Gastrocnemius medialis (tissue), 4 donors: ENCODE measurements at regions of chr16 and their contacts with region 1.

Region 1: GRCh38 chr16:66928702-66929388 is 3.5 kb upstream of the RRAD start:
- DNase-seq: peak in 1 of 2 donors; percentile 88
- ATAC-seq: peak; percentile 4 to 10
- H3K4me3 ChIP-seq: no peak overlapping the region
- H3K27ac ChIP-seq: peak overlapping the region; percentile 91 to 99 (median 96)
- H3K4me1 ChIP-seq: peaks cover 59 to 83% of the 10 kb centered on the region in 2 donors
- H3K27me3 ChIP-seq: no peaks in the 10 kb centered on the region
- CTCF ChIP-seq: peak; percentile 41 to 69 (median 62)
- POLR2A ChIP-seq: peak in 1 of 2 donors; percentile 31

Region 2: GRCh38 chr16:66894948-66895688 is 33.7 kb before region 1 on chr16:
- in situ Hi-C with region 1: no loop called
- intact Hi-C with region 1: loop called (anchors 1 kb)
- DNase-seq: peak; percentile 66 to 81
- ATAC-seq: peak; percentile 51 to 53
- H3K4me3 ChIP-seq: no peak overlapping the region
- H3K27ac ChIP-seq: peak overlapping the region; percentile 71 to 98 (median 96)
- H3K4me1 ChIP-seq: peaks cover 21 to 25% of the 10 kb centered on the region in 2 donors
- H3K27me3 ChIP-seq: no peaks in the 10 kb centered on the region
- CTCF ChIP-seq: peak; percentile 80 to 94 (median 88)
- POLR2A ChIP-seq: no peak

Region 3: GRCh38 chr16:66899945-66900710 is 28.7 kb before region 1 on chr16:
- in situ Hi-C with region 1: no loop called
- intact Hi-C with region 1: loop called (anchors 1 kb)
- DNase-seq: peak; percentile 81 to 98
- ATAC-seq: peak; percentile 55 to 58
- H3K4me3 ChIP-seq: peak overlapping the region in 3 of 4 donors; percentile 7 to 13 (median 11)
- H3K27ac ChIP-seq: peak overlapping the region; percentile 85 to 98 (median 96)
- H3K4me1 ChIP-seq: peaks cover 61 to 71% of the 10 kb centered on the region in 2 donors
- H3K27me3 ChIP-seq: no peaks in the 10 kb centered on the region
- CTCF ChIP-seq: no peak
- POLR2A ChIP-seq: peak; percentile 32 to 60

Region 4: GRCh38 chr16:66961065-66961744 is 32.4 kb after region 1 on chr16 and contains the start of gene CES3:
- in situ Hi-C with region 1: no loop called
- intact Hi-C with region 1: no loop called
- DNase-seq: peak in 1 of 2 donors; percentile 57
- ATAC-seq: peak; percentile 35 to 67
- H3K4me3 ChIP-seq: no peak within 1 kb of the TSS
- H3K27ac ChIP-seq: peak within 1 kb of the TSS; percentile 43 to 71 (median 54)
- H3K4me1 ChIP-seq: peaks cover 19 to 21% of the 10 kb centered on the region in 2 donors
- H3K27me3 ChIP-seq: no peaks in the 10 kb centered on the region
- CTCF ChIP-seq: peak; percentile 19 to 68 (median 50)
- POLR2A ChIP-seq: no peak
- total RNA-seq, gene CES3: 10.3 to 30.3 (median 12.9) TPM